Activated CD4-positive, alpha-beta memory T cell treated with anti-CD3 and anti-CD28 coated beads for 36 hours (primary cell): ENCODE measurements at regions of chr7 and their contacts with region 1.

Region 1: DNA sequence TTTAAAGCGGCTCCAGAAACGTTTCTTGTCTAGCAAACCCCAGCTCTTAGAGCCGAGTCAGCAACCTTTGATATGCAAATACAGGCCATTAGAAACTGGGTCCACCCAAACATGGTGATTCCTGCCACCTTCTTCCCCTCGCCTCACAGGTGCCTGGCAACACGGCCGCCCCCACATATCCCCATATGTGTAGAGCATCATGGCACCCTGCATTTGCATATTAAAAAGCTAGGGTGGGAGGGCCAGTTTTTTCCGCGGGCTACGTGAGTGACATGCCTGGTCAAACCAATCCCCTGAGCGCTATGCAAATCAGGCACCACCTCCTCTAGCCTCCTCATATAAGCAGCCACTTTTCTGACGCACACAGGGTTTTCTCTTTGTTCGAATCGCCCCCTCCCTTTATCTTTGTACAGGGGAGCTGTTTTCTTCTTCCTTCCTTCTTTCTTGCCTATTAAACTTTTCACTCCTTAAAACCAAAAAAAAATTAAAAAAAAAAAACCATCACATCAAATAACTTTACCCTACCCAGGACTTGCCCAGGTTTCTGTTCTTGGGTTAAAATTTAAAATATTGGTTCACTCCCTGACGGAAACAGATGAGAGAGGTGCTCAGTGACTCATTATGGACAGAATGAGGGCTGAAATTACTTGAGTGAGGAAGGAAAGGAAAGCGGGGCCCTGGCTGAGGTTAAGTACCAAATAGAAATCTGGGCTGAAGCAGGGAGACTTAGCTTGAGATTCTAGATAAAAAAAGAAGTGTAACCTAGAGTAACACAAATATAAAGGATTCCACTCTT is 59.8 kb downstream of the COA1 start:
- DNase-seq: peak; percentile 96
- H3K4me3 Mint-ChIP-seq: peak overlapping the region; percentile 78
- H3K27ac Mint-ChIP-seq: peak overlapping the region; percentile 96
- H3K4me1 Mint-ChIP-seq: peaks cover 78% of the 10 kb centered on the region
- H3K27me3 Mint-ChIP-seq: no peaks in the 10 kb centered on the region

Region 2: DNA sequence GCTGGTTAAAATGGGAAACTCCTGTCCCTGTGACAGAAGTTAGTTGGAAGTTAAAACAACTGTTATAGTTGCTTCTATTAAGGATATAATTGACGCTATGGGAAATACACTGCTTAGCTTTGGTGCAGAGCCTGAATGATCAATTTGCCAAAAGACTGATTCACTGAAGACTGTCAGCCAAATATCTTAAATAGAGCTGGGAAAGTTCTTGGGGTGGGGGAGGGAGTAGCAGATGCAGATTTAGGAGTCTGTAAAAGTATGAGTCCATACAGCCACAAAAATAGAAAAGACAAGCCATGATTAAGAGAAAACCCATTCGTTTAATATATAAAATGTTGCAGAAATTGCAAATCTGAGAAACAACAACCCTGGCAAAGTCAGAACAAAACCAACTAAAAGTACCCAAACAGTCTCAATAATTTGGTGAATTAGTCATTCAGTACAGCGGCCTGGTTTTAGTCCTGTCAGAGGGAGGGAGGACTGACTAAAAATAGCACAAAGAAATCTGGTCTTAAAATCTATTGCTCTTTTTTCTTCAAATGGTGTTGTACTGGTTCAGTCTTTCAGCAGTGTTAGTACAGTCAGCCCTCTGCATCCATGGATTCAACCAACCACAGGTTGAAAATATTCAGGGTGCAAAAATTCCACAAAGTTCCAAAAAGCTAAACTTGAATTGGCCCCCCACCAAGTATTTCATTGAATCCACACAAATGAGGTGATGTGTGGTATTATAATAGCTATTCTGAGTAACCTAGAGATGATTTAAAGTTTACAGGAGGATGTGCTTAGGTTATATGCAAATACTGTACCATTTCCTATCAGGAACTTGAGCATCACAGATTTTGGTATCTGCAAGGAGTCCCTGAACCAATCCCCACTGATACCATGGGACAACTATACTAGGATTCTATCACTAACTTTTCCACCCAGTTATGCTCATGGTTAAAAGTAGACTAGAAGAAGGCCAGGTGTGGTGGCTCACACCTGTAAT is 56.6 kb before region 1 on chr7:
- CTCF ChIA-PET with region 1: no interaction called
- POLR2A ChIA-PET with region 1: no interaction called
- intact Hi-C with region 1: loop called (anchors 2 kb)
- DNase-seq: peak; percentile 33
- H3K4me3 Mint-ChIP-seq: peak overlapping the region; percentile 43
- H3K27ac Mint-ChIP-seq: peak overlapping the region; percentile 83
- H3K4me1 Mint-ChIP-seq: peaks cover 58% of the 10 kb centered on the region
- H3K27me3 Mint-ChIP-seq: no peaks in the 10 kb centered on the region

Region 3: GRCh38 chr7:43658718-43659548 is 10.6 kb before region 1 on chr7:
- CTCF ChIA-PET with region 1: interaction called, 3 read pairs
- POLR2A ChIA-PET with region 1: no interaction called
- intact Hi-C with region 1: loop called (anchors 1 kb)
- DNase-seq: peak; percentile 77
- H3K4me3 Mint-ChIP-seq: peak overlapping the region; percentile 53
- H3K27ac Mint-ChIP-seq: peak overlapping the region; percentile 98
- H3K4me1 Mint-ChIP-seq: peaks cover 67% of the 10 kb centered on the region
- H3K27me3 Mint-ChIP-seq: no peaks in the 10 kb centered on the region

Region 4: DNA sequence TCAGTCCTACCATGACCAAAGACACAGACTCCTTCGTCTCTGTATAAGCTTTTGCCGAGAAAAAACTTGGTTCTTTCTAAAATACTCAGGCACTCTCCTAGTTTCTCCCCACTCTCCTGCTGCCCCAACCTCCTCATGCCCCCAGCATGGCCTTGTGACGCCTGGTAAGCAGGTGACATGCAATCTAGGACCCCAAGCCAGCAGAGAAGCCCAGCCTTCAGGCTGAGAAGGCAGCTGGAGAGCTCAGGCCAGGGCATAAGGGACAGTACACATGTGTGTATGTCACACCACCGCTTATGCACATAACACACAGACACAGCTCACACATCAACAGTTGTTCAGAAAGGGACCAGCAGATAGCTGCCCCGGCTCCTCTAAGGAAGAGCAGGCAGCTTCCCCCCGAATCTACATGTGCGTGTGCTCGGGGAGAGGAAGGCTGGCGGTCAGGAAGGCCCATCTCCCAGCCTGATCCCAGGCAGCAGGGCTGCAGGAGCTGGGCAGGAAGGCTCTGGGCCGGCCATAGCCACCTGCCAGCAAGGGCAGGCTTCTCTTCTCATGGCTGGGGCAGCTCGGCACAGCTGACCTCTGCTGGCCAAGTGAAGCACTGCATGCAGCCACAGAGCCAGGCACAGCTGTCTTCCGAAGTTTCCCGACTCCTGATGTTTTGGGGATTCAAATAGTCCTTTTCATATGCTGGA is 895.8 kb after region 1 on chr7:
- CTCF ChIA-PET with region 1: no interaction called
- POLR2A ChIA-PET with region 1: no interaction called
- intact Hi-C with region 1: no loop called
- DNase-seq: peak; percentile 77
- H3K4me3 Mint-ChIP-seq: no peak overlapping the region
- H3K27ac Mint-ChIP-seq: peak overlapping the region; percentile 23
- H3K4me1 Mint-ChIP-seq: peaks cover 10% of the 10 kb centered on the region
- H3K27me3 Mint-ChIP-seq: no peaks in the 10 kb centered on the region